GM10248 (cell line): ENCODE measurements at regions of chr6 and their contacts with region 1.

Region 1: GRCh38 chr6:137248702-137249101 is 29.5 kb upstream of the IFNGR1 start:
- DNase-seq: no peak
- CTCF ChIP-seq: no peak

Region 2: GRCh38 chr6:137119196-137120104 is 129.3 kb before region 1 on chr6:
- CTCF ChIA-PET with region 1: no interaction called
- POLR2A ChIA-PET with region 1: no interaction called
- DNase-seq: no peak
- CTCF ChIP-seq: no peak

Region 3: GRCh38 chr6:137261393-137262160 is 12.9 kb after region 1 on chr6:
- CTCF ChIA-PET with region 1: interaction called, 17 read pairs
- POLR2A ChIA-PET with region 1: no interaction called
- DNase-seq: peak; percentile 28
- CTCF ChIP-seq: no peak